Naive thymus-derived CD4-positive, alpha-beta T cell (primary cell): ENCODE measurements at regions of chr2 and their contacts with region 1.

Region 1: GRCh38 chr2:121736462-121737341 is at the start of gene NIFK:
- DNase-seq: peak; percentile 98 to 100 (median 99)
- ATAC-seq: peak; percentile 96
- H3K4me3 ChIP-seq: peak within 1 kb of the TSS; percentile 80
- H3K4me3 Mint-ChIP-seq: peak within 1 kb of the TSS; percentile 81 to 99 (median 95)
- H3K27ac ChIP-seq: peak within 1 kb of the TSS; percentile 89
- H3K27ac Mint-ChIP-seq: peak within 1 kb of the TSS; percentile 85 to 99 (median 97)
- H3K4me1 ChIP-seq: peaks cover 13 to 19% of the 10 kb centered on the region in 2 donors
- H3K4me1 Mint-ChIP-seq: peaks cover 17 to 54% (median 38%) of the 10 kb centered on the region in 7 donors
- H3K27me3 ChIP-seq: no peaks in the 10 kb centered on the region
- H3K27me3 Mint-ChIP-seq: no peaks in the 10 kb centered on the region
- total RNA-seq, gene NIFK: 35.3 to 88.1 (median 71.9) TPM

Region 2: DNA sequence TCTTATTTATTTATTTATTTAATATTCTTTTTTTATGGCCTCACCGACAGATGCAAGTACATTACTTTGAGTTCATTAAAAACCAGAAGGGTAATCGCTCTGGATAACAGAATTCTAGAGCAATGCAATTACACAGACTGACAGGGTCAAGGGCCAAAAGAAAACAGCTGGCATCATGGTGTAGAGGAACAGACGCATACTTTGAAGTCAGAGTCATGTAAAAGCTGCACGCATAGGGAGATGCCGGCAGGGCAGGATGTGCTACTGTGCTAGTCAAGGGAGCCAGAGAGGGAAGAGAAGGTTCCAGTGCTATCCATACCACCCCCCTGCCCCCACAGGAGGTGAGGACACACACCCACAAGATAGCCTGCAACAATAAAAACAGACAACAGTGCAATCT is 336.5 kb before region 1 on chr2:
- CTCF ChIA-PET with region 1: no interaction called
- POLR2A ChIA-PET with region 1: no interaction called
- intact Hi-C with region 1: loop called in 1 of 2 experiments (anchors 5 kb)
- DNase-seq: no peak
- ATAC-seq: no peak
- H3K4me3 ChIP-seq: no peak overlapping the region
- H3K4me3 Mint-ChIP-seq: no peak overlapping the region
- H3K27ac ChIP-seq: no peak overlapping the region
- H3K27ac Mint-ChIP-seq: peak overlapping the region in 2 of 9 donors; percentile 38 to 67
- H3K4me1 ChIP-seq: no peaks in the 10 kb centered on the region
- H3K4me1 Mint-ChIP-seq: peaks cover 0 to 3% (median 0%) of the 10 kb centered on the region in 7 donors
- H3K27me3 ChIP-seq: no peaks in the 10 kb centered on the region
- H3K27me3 Mint-ChIP-seq: no peaks in the 10 kb centered on the region

Region 3: GRCh38 chr2:121596221-121597080 is 140.3 kb before region 1 on chr2:
- CTCF ChIA-PET with region 1: interaction called, 3 read pairs
- POLR2A ChIA-PET with region 1: no interaction called
- intact Hi-C with region 1: loop called in 1 of 2 experiments (anchors 1 kb)
- DNase-seq: peak in 4 of 9 donors; percentile 9 to 17 (median 14)
- ATAC-seq: peak; percentile 95
- H3K4me3 ChIP-seq: no peak overlapping the region
- H3K4me3 Mint-ChIP-seq: peak overlapping the region; percentile 51 to 90 (median 77)
- H3K27ac ChIP-seq: peak overlapping the region; percentile 55
- H3K27ac Mint-ChIP-seq: peak overlapping the region; percentile 33 to 96 (median 83)
- H3K4me1 ChIP-seq: peaks cover 9 to 14% of the 10 kb centered on the region in 2 donors
- H3K4me1 Mint-ChIP-seq: peaks cover 30 to 66% (median 59%) of the 10 kb centered on the region in 7 donors
- H3K27me3 ChIP-seq: no peaks in the 10 kb centered on the region
- H3K27me3 Mint-ChIP-seq: no peaks in the 10 kb centered on the region

Region 4: DNA sequence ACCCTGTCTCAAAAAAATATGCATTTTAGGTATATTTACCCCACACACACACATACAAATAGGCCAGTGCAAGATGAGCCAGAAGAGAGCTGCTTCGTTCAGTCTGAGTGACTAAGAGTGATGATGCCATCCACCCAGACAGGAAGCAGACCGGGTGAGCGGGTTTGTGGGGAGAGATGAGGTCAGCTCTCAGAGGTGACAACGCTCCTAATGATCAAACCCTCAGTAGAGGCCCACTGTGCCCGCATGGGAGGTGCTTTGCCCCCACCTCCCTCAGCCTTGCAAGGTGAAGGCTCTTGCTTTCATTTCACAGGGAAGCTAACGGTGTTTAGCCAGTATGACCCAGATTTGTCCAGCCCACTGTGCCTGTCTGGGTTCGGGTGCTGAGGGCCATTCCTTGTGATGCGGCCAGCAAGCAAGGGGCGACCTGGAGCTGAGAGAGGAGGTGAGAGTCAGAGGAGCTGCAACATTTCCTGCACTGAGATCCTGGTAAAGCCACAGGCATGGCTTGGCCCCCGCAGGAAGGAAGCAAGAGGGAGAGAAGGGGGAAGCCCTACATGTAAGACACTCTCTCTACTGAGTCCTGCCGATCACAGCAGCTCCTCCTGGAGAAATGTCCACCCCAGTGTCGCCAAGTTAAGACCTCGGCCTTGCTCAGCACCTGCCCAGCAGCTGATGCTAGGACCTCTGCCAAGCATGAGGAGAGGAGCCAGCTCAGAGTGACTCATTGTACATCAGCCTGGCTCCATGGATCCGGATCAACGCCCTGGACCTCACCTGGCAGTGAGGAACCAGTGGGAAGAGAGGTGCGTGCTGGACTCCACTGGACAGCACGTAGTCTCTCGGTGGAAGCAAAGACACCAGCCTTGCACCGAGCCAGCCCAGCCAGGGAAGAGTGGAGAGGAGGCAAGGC is 37.0 kb before region 1 on chr2:
- CTCF ChIA-PET with region 1: no interaction called
- POLR2A ChIA-PET with region 1: interaction called, 4 read pairs
- intact Hi-C with region 1: loop called in 1 of 2 experiments (anchors 1 kb)
- DNase-seq: peak; percentile 32 to 80 (median 56)
- ATAC-seq: peak; percentile 98
- H3K4me3 ChIP-seq: peak overlapping the region; percentile 12
- H3K4me3 Mint-ChIP-seq: peak overlapping the region; percentile 73 to 92 (median 82)
- H3K27ac ChIP-seq: no peak overlapping the region
- H3K27ac Mint-ChIP-seq: peak overlapping the region; percentile 73 to 96 (median 90)
- H3K4me1 ChIP-seq: peaks cover 13 to 31% of the 10 kb centered on the region in 2 donors
- H3K4me1 Mint-ChIP-seq: peaks cover 13 to 46% (median 24%) of the 10 kb centered on the region in 7 donors
- H3K27me3 ChIP-seq: no peaks in the 10 kb centered on the region
- H3K27me3 Mint-ChIP-seq: no peaks in the 10 kb centered on the region

Region 5: GRCh38 chr2:121717529-121717928 is 19.2 kb before region 1 on chr2:
- CTCF ChIA-PET with region 1: no interaction called
- POLR2A ChIA-PET with region 1: no interaction called
- intact Hi-C with region 1: no loop called
- DNase-seq: no peak
- ATAC-seq: no peak
- H3K4me3 ChIP-seq: no peak overlapping the region
- H3K4me3 Mint-ChIP-seq: no peak overlapping the region
- H3K27ac ChIP-seq: no peak overlapping the region
- H3K27ac Mint-ChIP-seq: no peak overlapping the region
- H3K4me1 ChIP-seq: peaks cover 0 to 6% of the 10 kb centered on the region in 2 donors
- H3K4me1 Mint-ChIP-seq: peaks cover 2 to 16% (median 6%) of the 10 kb centered on the region in 7 donors
- H3K27me3 ChIP-seq: no peaks in the 10 kb centered on the region
- H3K27me3 Mint-ChIP-seq: no peaks in the 10 kb centered on the region

Region 6: DNA sequence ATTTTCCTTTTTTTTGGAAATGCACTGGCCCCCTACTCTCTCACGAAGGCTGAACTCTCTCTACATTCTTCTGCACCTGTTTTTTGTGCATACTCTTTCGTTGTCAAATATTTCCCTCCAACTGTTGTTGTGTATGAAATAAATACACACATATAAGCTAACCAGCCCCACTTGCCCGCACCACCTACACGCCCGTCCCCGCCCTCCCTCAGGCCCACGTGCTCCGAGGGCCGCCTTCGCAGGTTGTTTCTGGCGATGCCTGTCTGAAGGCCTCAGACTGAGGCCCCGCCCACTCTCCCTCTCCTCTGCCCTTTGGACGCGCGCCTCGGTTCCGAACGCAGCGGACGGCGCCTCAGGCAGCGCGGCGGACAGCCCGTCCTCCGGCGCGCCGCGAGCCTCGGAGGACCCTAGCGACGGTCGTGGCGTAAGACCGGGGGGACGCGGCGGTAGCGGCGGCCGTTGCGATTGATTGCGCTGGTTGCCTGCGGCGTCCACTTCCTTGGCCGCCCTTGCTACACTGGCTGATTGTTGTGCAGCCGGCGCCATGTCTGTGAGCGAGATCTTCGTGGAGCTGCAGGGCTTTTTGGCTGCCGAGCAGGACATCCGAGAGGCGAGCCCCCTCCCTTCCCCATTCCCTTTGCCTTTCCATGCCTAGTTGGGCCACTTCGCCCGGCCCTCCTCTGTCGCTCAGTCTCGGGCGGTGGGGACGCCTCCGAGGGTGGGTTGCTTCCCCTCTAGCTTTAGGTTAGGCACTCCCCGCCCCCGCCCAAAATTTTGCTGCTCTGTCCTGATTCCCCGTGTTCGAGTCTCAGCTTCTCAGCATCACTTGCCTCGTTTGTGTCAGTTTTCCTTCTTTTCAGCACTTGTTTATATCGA is 18.8 kb after region 1 on chr2 and contains the start of gene TSN:
- CTCF ChIA-PET with region 1: no interaction called
- POLR2A ChIA-PET with region 1: interaction called, 29 read pairs
- intact Hi-C with region 1: loop called (anchors 1 kb)
- DNase-seq: peak; percentile 94 to 97 (median 96)
- ATAC-seq: peak; percentile 99
- H3K4me3 ChIP-seq: peak within 1 kb of the TSS; percentile 91
- H3K4me3 Mint-ChIP-seq: peak within 1 kb of the TSS; percentile 90 to 100 (median 96)
- H3K27ac ChIP-seq: peak within 1 kb of the TSS; percentile 82
- H3K27ac Mint-ChIP-seq: peak within 1 kb of the TSS; percentile 69 to 98 (median 94)
- H3K4me1 ChIP-seq: peaks cover 4 to 10% of the 10 kb centered on the region in 2 donors
- H3K4me1 Mint-ChIP-seq: peaks cover 20 to 43% (median 32%) of the 10 kb centered on the region in 7 donors
- H3K27me3 ChIP-seq: no peaks in the 10 kb centered on the region
- H3K27me3 Mint-ChIP-seq: no peaks in the 10 kb centered on the region
- total RNA-seq, gene TSN: 35.8 to 65.8 (median 58.3) TPM

Region 7: GRCh38 chr2:122136056-122136455 is 399.4 kb after region 1 on chr2:
- CTCF ChIA-PET with region 1: no interaction called
- POLR2A ChIA-PET with region 1: no interaction called
- intact Hi-C with region 1: loop called in 1 of 2 experiments (anchors 2 kb)
- DNase-seq: peak in 1 of 9 donors; percentile 4
- ATAC-seq: no peak
- H3K4me3 ChIP-seq: no peak overlapping the region
- H3K4me3 Mint-ChIP-seq: no peak overlapping the region
- H3K27ac ChIP-seq: no peak overlapping the region
- H3K27ac Mint-ChIP-seq: no peak overlapping the region
- H3K4me1 ChIP-seq: no peaks in the 10 kb centered on the region
- H3K4me1 Mint-ChIP-seq: peaks cover 0 to 14% (median 0%) of the 10 kb centered on the region in 7 donors
- H3K27me3 ChIP-seq: no peaks in the 10 kb centered on the region
- H3K27me3 Mint-ChIP-seq: peaks cover 0 to 22% (median 13%) of the 10 kb centered on the region in 5 donors